Heart right ventricle (tissue), 16 donors: ENCODE measurements at regions of chr4 and their contacts with region 1.

Region 1: DNA sequence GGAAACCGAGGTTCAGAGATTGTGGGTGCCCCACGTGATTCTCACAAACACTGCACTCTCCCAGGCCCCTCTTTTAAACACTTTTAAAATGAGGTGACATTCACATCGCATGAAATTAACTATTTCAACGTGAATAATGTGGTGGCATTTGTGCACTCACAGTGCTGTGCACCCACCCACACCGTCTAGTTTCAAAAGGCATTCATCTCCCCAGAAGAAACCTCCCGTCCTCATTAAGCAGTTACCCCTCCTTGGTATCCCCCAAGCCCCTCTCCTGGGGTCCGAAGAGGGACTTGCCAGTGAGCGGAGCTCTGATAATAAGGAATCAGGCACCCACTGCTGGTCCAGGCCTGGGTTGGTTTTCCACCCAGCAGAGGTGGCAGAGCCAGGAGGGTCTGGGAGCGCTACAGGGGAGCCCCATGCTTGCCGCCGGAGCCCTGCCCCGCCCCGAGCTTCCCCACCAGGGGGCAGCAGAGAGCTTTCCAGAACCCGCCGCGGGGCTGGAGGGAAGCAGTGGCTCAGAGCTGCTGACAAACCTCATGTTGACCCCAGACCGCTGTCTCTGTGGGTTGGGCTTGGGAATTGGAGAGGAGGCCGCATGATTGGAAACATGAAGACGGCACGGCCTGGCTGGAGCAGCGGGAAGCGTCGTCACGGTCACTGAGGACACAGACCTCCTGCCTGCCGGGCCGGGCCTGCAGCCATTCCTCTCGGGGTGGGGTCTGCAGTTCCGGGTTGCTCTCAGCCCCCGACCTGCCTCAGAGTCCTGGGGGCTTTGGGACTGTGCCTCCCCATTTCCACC is 27.5 kb upstream of the HTRA3 start:
- DNase-seq: peak; percentile 88 to 91
- ATAC-seq: peak; percentile 84 to 93 (median 90)
- H3K4me3 ChIP-seq: no peak overlapping the region
- H3K27ac ChIP-seq: peak overlapping the region in 7 of 10 donors; percentile 24 to 72 (median 57)
- H3K4me1 ChIP-seq: peaks cover 12 to 21% (median 17%) of the 10 kb centered on the region in 9 donors
- H3K27me3 ChIP-seq: no peaks in the 10 kb centered on the region
- CTCF ChIP-seq: peak; percentile 97 to 100 (median 98)

Region 2: DNA sequence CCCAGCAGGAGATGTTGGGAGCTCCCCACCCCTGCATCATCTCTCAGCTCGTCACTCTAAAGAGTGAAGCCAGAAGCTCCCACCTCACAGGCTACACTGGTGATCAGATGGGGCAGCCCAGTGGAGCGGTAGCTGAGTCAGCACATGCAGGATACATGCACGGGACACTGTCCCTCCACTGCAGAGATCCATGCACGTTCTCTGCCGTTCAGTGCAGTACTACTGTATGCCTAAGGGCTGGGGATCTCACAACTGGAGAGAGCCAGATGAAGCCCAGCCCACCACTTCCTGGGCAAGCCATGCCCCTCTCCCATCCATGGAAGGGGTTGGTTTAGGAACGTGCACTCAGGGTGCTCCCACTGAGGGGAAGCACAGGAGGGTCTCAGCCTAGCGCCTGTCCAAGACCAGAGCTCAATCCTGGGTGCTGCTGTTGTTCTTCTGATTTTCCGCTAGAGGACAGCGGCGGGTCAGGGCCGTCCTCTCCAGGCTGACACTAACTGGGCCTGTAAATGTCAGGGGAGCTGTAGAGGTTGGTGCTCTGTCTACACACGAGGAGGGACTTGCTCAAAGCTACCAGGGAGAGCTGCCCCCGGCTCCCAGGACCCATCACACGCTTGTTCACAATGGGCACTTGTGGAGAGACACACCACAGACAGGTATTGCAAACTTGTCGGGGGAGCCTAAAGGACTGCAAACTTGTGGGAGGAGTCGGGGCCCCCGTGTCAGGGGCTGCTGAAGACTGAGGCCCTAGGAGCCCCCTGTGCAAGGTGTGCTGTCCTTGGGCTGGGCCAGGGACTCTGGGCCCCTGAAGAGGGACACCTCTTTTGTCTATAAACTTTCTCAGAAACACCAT is 65.3 kb before region 1 on chr4:
- intact Hi-C with region 1: loop called in 5 of 10 experiments (anchors 5 to 10 kb)
- DNase-seq: peak in 1 of 2 donors; percentile 51
- ATAC-seq: peak; percentile 71 to 88 (median 80)
- H3K4me3 ChIP-seq: no peak overlapping the region
- H3K27ac ChIP-seq: peak overlapping the region in 1 of 10 donors; percentile 12
- H3K4me1 ChIP-seq: peaks cover 5 to 35% (median 24%) of the 10 kb centered on the region in 9 donors
- H3K27me3 ChIP-seq: peaks cover 0 to 11% (median 0%) of the 10 kb centered on the region in 7 donors
- CTCF ChIP-seq: peak; percentile 75 to 91 (median 84)

Region 3: GRCh38 chr4:8182858-8183725 is 59.0 kb before region 1 on chr4:
- intact Hi-C with region 1: loop called in 5 of 10 experiments (anchors 5 to 10 kb)
- DNase-seq: peak; percentile 92 to 94
- ATAC-seq: peak; percentile 84 to 95 (median 92)
- H3K4me3 ChIP-seq: no peak overlapping the region
- H3K27ac ChIP-seq: peak overlapping the region in 8 of 10 donors; percentile 45 to 79 (median 68)
- H3K4me1 ChIP-seq: peaks cover 18 to 57% (median 46%) of the 10 kb centered on the region in 9 donors
- H3K27me3 ChIP-seq: no peaks in the 10 kb centered on the region
- CTCF ChIP-seq: no peak

Region 4: DNA sequence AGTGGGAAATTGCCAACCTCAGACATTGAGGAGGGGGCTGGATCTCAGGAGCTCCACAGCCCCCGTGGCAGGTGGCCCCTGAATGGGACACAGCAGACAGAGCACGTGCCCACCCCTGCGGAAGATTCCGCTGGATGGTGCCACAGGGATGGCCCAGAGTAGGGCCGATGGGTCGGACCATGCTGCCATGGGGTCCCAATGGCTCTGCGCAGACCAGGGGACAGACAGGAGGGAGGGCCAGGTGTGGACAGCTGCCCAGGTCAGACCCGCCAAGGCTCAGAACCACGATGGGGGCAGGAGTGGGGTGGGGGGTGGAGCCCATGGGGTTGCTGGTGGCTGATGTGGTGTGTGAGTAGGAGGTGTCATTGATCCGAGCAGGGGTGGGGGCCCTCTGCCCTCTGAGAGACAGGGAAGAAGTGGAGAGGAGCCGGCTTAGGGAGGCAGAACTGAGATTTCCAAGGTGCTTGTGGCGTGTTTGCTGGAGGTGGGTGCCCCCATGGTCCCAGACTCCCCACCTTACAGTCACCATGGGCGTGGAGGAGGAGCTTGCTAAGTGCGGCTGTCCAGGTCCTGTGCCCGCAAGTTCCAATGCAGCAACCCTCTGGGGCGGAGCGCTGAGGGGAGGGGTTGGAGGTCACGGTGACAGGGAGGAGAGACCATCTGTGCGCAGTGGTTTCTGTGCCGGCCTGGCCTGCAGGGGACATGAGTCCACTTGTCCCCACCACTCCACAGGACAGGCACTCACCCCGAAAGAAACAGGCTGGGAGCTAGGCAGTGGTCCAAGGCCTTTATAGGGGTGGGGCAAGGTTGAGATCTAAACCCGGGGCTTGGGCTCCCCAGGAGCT is 30.1 kb before region 1 on chr4:
- intact Hi-C with region 1: loop called in 1 of 10 experiments (anchors 1 kb)
- DNase-seq: no peak
- ATAC-seq: no peak
- H3K4me3 ChIP-seq: no peak overlapping the region
- H3K27ac ChIP-seq: no peak overlapping the region
- H3K4me1 ChIP-seq: peaks cover 0 to 32% (median 8%) of the 10 kb centered on the region in 9 donors
- H3K27me3 ChIP-seq: no peaks in the 10 kb centered on the region
- CTCF ChIP-seq: no peak

Region 5: DNA sequence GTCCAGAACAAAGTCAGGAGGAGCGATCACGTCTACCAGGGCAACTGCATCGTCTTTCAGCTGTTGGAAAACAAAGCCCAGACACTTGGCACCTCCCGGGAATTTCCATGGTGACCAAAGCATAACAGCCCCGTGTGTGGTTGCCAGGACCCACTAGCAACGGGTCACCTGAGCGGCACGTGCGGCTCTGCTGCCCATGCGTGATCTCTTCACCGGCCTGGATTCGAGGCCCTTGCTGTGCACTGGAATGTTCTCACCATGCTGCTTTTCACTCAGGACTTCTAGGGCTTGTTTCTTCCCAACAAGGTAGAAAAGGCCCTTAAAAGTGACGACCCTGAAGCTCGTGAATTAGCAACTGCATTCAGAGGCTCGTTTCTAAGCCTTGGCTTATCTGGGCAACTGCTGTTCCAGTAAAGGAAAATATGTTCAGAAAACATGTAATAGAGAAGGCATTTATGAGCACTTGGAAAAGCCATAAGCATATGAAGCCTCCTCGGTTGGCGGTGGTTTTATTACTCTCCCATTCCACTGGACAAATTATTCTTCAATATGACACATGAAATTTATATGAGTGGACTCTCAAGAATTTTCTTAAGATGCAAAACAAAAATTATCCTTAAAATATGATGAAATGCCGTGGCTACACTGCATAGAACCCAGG is 129.0 kb after region 1 on chr4:
- intact Hi-C with region 1: no loop called
- DNase-seq: peak; percentile 72 to 78
- ATAC-seq: peak; percentile 63 to 90 (median 78)
- H3K4me3 ChIP-seq: no peak overlapping the region
- H3K27ac ChIP-seq: peak overlapping the region in 7 of 10 donors; percentile 34 to 80 (median 58)
- H3K4me1 ChIP-seq: peaks cover 0 to 13% (median 0%) of the 10 kb centered on the region in 9 donors
- H3K27me3 ChIP-seq: no peaks in the 10 kb centered on the region
- CTCF ChIP-seq: no peak

Region 6: DNA sequence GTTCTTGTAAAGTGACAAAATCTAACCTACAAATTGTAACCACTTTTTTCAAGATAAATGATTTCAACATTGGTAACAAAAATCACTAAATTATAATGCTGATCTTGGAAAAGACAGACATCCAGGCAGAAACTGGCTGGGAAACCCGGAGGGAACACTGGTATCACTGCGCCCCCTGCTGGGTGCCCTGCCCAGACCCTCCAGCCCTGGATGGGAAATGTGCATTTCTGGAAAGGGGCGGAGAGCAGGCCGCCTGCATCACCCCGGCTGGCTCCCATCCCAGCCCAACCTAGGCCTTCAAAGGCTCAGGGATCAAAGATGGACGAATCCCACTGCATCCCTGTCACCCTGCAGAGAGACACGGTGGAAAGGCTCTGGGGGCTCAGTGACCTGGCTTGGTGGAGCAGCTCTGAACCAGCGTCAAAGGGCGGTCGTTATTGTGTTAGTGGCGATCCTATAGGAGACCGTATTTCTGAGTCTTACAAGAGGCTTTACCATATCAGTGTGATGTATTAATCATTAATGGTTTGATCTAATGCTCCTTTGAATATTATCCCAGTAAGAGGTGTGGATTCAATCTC is 161.2 kb after region 1 on chr4:
- intact Hi-C with region 1: loop called (anchors 1 to 5 kb)
- DNase-seq: peak; percentile 88 to 91
- ATAC-seq: peak; percentile 71 to 93 (median 86)
- H3K4me3 ChIP-seq: no peak overlapping the region
- H3K27ac ChIP-seq: peak overlapping the region; percentile 21 to 92 (median 80)
- H3K4me1 ChIP-seq: peaks cover 10 to 46% (median 32%) of the 10 kb centered on the region in 9 donors
- H3K27me3 ChIP-seq: no peaks in the 10 kb centered on the region
- CTCF ChIP-seq: peak; percentile 83 to 99 (median 94)

Region 7: GRCh38 chr4:8409264-8410065 is 167.4 kb after region 1 on chr4:
- intact Hi-C with region 1: loop called in 4 of 10 experiments (anchors 2 to 5 kb)
- DNase-seq: peak; percentile 47 to 62
- ATAC-seq: peak; percentile 46 to 80 (median 72)
- H3K4me3 ChIP-seq: no peak overlapping the region
- H3K27ac ChIP-seq: no peak overlapping the region
- H3K4me1 ChIP-seq: peaks cover 0 to 38% (median 18%) of the 10 kb centered on the region in 9 donors
- H3K27me3 ChIP-seq: no peaks in the 10 kb centered on the region
- CTCF ChIP-seq: no peak

Region 8: GRCh38 chr4:8594097-8595038 is 352.3 kb after region 1 on chr4:
- intact Hi-C with region 1: loop called in 8 of 10 experiments (anchors 5 to 10 kb)
- DNase-seq: peak in 1 of 2 donors; percentile 64
- ATAC-seq: peak in 7 of 8 donors; percentile 51 to 80 (median 70)
- H3K4me3 ChIP-seq: no peak overlapping the region
- H3K27ac ChIP-seq: no peak overlapping the region
- H3K4me1 ChIP-seq: peaks cover 0 to 12% (median 0%) of the 10 kb centered on the region in 9 donors
- H3K27me3 ChIP-seq: peaks cover 7 to 67% (median 47%) of the 10 kb centered on the region in 7 donors
- CTCF ChIP-seq: peak; percentile 29 to 75 (median 67)